Dendritic cell treated with granulocyte-macrophage colony-stimulating factor and Interleukin-4, amounts not matched to agents 40 ng/mL and 50 ng/mL, for 4 days (primary cell): ENCODE measurements at regions of chr17 and their contacts with region 1.

Region 1: GRCh38 chr17:60525685-60526514 is at the start of gene APPBP2:
- H3K4me3 Mint-ChIP-seq: peak within 1 kb of the TSS; percentile 99
- H3K27ac Mint-ChIP-seq: peak within 1 kb of the TSS; percentile 98
- H3K4me1 Mint-ChIP-seq: peaks cover 17% of the 10 kb centered on the region
- H3K27me3 Mint-ChIP-seq: peaks cover under 1% of the 10 kb centered on the region

Region 2: GRCh38 chr17:60600490-60601446 is 74.9 kb after region 1 on chr17:
- intact Hi-C with region 1: loop called (anchors 1 kb)
- H3K4me3 Mint-ChIP-seq: peak overlapping the region; percentile 94
- H3K27ac Mint-ChIP-seq: peak overlapping the region; percentile 94
- H3K4me1 Mint-ChIP-seq: peaks cover 62% of the 10 kb centered on the region
- H3K27me3 Mint-ChIP-seq: peaks cover 1% of the 10 kb centered on the region

Region 3: DNA sequence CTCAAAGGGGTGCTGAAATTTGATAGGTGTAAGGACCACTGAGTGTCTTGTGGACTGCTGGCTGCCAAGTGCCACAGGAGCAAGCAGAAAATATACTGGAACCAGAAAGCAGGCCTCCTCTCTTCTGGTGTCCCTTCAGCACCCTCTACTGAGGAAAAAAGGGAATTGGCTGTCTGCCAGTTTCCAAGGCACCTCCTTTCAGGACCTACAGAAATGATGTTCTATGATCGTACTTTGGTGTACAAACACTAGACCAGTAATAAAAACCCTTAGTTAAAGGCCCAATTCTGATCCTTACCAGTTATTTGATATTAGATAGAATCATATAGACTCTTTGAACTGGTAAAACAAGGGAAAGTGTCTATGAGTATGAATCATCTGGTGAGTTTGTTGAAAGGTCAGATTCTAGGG is 115.9 kb after region 1 on chr17:
- intact Hi-C with region 1: loop called (anchors 5 kb)
- H3K4me3 Mint-ChIP-seq: no peak overlapping the region
- H3K27ac Mint-ChIP-seq: no peak overlapping the region
- H3K4me1 Mint-ChIP-seq: peaks cover 18% of the 10 kb centered on the region
- H3K27me3 Mint-ChIP-seq: no peaks in the 10 kb centered on the region